ENCODE measurements at regions of chr11 and their contacts with region 1.

Region 1: DNA sequence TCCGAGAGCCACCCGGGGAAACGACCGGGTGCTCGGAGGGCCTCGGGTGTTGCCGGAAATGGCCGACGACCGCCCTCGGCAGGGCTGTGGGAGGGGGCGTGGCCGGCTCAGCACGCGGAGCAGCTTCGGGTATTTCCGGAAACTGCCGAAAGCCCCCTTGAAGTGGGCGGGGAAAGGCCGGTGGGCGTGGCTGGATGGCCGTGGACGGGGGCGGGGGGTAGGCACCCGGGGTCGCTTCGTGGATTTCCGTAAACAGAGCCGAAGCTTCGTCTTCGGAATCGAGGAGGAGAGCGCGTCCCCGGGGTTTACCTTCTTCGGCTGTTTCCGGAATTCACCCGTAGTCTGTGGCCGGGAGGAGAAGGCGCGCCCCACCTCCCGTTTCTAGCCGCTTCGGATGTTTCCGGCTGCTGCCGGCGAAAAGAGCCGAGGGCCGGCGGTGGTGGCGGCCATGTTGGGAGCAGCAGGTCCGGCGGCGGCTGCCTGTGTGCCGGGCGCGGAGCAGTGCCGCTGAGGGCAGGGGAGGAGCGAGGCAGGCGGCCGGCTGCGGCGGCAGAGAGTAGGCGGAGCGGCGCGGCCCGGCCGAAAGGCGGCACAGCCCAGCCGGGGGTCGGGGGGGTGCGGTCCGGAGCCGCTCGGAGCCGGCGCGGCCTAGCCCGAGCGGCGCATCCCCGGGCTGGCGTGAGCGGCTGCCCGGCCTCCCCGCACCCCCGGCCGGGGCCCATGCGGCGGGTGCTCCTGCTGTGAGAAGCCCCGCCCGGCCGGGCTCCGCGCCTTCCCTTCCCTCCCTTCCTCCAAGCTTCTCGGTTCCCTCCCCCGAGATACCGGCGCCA is at the start of gene MARK2:
- DNase-seq: peak; percentile 99
- ATAC-seq: peak; percentile 90
- H3K4me3 Mint-ChIP-seq: peak within 1 kb of the TSS; percentile 98
- H3K27ac Mint-ChIP-seq: peak within 1 kb of the TSS; percentile 93
- H3K4me1 Mint-ChIP-seq: peaks cover 46% of the 10 kb centered on the region
- H3K27me3 Mint-ChIP-seq: no peaks in the 10 kb centered on the region
- CTCF ChIP-seq: no peak
- total RNA-seq, gene MARK2: 23.3 to 24.5 TPM

Region 2: GRCh38 chr11:63427971-63428508 is 410.9 kb before region 1 on chr11:
- CTCF ChIA-PET with region 1: no interaction called
- POLR2A ChIA-PET with region 1: no interaction called
- intact Hi-C with region 1: no loop called
- DNase-seq: peak; percentile 2
- ATAC-seq: no peak
- H3K4me3 Mint-ChIP-seq: no peak overlapping the region
- H3K27ac Mint-ChIP-seq: no peak overlapping the region
- H3K4me1 Mint-ChIP-seq: no peaks in the 10 kb centered on the region
- H3K27me3 Mint-ChIP-seq: peaks cover 21% of the 10 kb centered on the region
- CTCF ChIP-seq: no peak

Region 3: GRCh38 chr11:63866211-63866610 is 27.3 kb after region 1 on chr11:
- CTCF ChIA-PET with region 1: interaction called, 14 read pairs
- POLR2A ChIA-PET with region 1: interaction called, 5 read pairs
- intact Hi-C with region 1: loop called (anchors 5 kb)
- DNase-seq: peak; percentile 95
- ATAC-seq: peak; percentile 83
- H3K4me3 Mint-ChIP-seq: no peak overlapping the region
- H3K27ac Mint-ChIP-seq: peak overlapping the region; percentile 79
- H3K4me1 Mint-ChIP-seq: peaks cover 77% of the 10 kb centered on the region
- H3K27me3 Mint-ChIP-seq: no peaks in the 10 kb centered on the region
- CTCF ChIP-seq: no peak

Region 4: GRCh38 chr11:63882555-63883242 is 43.8 kb after region 1 on chr11:
- CTCF ChIA-PET with region 1: interaction called, 23 read pairs
- POLR2A ChIA-PET with region 1: interaction called, 9 read pairs
- intact Hi-C with region 1: no loop called
- DNase-seq: no peak
- ATAC-seq: peak; percentile 41
- H3K4me3 Mint-ChIP-seq: no peak overlapping the region
- H3K27ac Mint-ChIP-seq: peak overlapping the region; percentile 48
- H3K4me1 Mint-ChIP-seq: peaks cover 77% of the 10 kb centered on the region
- H3K27me3 Mint-ChIP-seq: no peaks in the 10 kb centered on the region
- CTCF ChIP-seq: no peak

Region 5: DNA sequence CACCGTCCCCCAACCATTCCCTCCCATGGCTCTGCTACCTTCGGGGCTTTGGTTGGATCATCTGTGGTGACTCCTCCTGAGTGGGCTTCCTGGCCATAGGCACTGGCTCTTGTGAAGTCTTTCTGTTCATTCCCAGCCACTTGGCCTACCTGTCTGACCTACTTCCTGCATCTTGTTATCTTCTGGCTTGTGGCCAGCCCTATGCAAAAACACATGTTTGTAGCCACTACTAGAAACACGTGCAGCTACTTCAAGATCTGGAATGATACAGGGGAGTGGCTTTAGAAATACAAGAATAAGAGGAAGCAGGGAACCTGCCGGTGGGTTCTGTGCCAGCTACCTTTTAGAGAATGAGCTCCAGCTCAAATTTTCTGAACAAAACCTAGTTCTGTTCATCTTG is 57.2 kb after region 1 on chr11:
- CTCF ChIA-PET with region 1: interaction called, 20 read pairs
- POLR2A ChIA-PET with region 1: interaction called, 3 read pairs
- intact Hi-C with region 1: loop called (anchors 10 kb)
- DNase-seq: no peak
- ATAC-seq: no peak
- H3K4me3 Mint-ChIP-seq: no peak overlapping the region
- H3K27ac Mint-ChIP-seq: no peak overlapping the region
- H3K4me1 Mint-ChIP-seq: peaks cover 23% of the 10 kb centered on the region
- H3K27me3 Mint-ChIP-seq: no peaks in the 10 kb centered on the region
- CTCF ChIP-seq: no peak

Region 6: DNA sequence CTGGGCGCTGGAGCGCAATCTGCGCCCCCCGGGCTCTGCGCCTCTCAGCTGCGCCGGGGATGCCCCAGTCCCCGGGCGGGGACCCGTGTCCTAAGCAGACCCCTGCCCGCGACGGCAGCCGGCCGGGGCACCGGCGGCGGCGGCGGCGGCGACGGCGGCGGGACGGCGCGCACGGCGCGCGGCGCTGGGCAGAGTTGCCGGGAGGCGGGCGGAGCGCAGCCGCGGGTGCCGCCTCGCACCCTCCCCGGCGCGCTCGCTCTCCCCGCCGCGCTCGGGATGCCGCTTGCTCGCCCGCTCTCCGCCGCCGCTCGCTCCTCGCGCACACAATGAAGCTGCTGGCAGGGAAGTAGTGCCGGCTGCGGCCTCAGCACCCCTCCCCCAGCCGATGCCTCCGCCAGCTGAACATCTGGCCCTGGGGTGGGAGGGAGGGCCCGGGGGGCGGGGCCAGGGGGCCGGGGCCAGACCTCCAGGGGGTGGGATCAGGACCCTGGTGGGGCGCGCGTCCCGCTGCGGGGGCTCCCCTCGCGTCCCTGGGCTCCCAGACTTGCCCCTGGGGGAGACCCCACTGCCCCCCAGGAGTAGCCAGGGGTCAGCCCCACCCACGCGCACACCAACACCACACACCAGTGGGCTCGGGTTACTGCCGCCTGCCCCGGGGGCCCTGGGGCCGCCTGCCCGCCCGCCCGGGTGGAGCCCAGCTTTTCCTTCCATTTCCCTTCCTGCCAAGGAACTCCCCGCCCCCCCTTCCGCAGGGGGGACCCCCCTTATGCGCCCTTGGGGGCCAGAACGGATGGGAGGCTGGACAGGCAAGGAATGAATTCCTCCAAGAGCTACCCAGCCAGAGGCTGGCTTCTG is 78.2 kb after region 1 on chr11 and contains the start of gene RCOR2:
- CTCF ChIA-PET with region 1: interaction called, 25 read pairs
- POLR2A ChIA-PET with region 1: interaction called, 3 read pairs
- intact Hi-C with region 1: loop called (anchors 5 kb)
- DNase-seq: peak; percentile 76
- ATAC-seq: peak; percentile 69
- H3K4me3 Mint-ChIP-seq: peak within 1 kb of the TSS; percentile 76
- H3K27ac Mint-ChIP-seq: no peak within 1 kb of the TSS
- H3K4me1 Mint-ChIP-seq: peaks cover 14% of the 10 kb centered on the region
- H3K27me3 Mint-ChIP-seq: no peaks in the 10 kb centered on the region
- CTCF ChIP-seq: no peak
- total RNA-seq, gene RCOR2: 0.61 to 2.1 TPM

Region 7: GRCh38 chr11:64000026-64000739 is 161.3 kb after region 1 on chr11:
- CTCF ChIA-PET with region 1: interaction called, 14 read pairs
- POLR2A ChIA-PET with region 1: no interaction called
- intact Hi-C with region 1: no loop called
- DNase-seq: peak; percentile 76
- ATAC-seq: peak; percentile 77
- H3K4me3 Mint-ChIP-seq: peak overlapping the region; percentile 15
- H3K27ac Mint-ChIP-seq: no peak overlapping the region
- H3K4me1 Mint-ChIP-seq: peaks cover 6% of the 10 kb centered on the region
- H3K27me3 Mint-ChIP-seq: peaks cover 4% of the 10 kb centered on the region
- CTCF ChIP-seq: peak; percentile 87

Region 8: GRCh38 chr11:64192434-64192833 is 353.5 kb after region 1 on chr11:
- CTCF ChIA-PET with region 1: no interaction called
- POLR2A ChIA-PET with region 1: no interaction called
- intact Hi-C with region 1: no loop called
- DNase-seq: no peak
- ATAC-seq: no peak
- H3K4me3 Mint-ChIP-seq: no peak overlapping the region
- H3K27ac Mint-ChIP-seq: peak overlapping the region; percentile 49
- H3K4me1 Mint-ChIP-seq: peaks cover 34% of the 10 kb centered on the region
- H3K27me3 Mint-ChIP-seq: no peaks in the 10 kb centered on the region
- CTCF ChIP-seq: no peak